Right cardiac atrium (tissue), 5 donors: ENCODE measurements at regions of chr11 and their contacts with region 1.

Region 1: DNA sequence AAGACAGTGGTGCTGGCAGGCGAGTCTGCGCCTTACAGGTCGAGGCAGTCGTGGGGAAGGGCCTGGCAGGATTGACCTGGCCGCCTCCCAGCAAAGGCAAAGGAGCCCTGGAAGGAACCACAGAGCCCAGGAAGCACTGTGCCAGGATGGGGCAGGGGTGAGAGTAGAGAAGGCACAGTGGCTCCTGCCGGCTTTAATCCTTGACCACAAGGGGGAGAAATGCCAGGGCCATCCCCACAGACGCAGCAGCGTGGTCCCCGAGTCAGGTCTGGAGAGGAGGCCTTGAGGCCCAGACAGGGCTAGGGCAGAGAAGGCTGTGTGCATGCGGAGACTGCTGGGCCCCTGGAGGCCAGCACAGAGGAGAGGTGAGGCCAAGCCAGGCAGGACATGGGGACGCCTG is 9.9 kb upstream of the NDUFS8 start:
- DNase-seq: no peak
- ATAC-seq: peak; percentile 14 to 17
- H3K4me3 ChIP-seq: no peak overlapping the region
- H3K27ac ChIP-seq: no peak overlapping the region
- H3K4me1 ChIP-seq: peaks cover 5% of the 10 kb centered on the region
- H3K27me3 ChIP-seq: no peaks in the 10 kb centered on the region

Region 2: GRCh38 chr11:68003846-68004550 is 16.6 kb before region 1 on chr11 and contains the start of gene UNC93B1:
- intact Hi-C with region 1: no loop called
- DNase-seq: peak; percentile 94 to 98 (median 98)
- ATAC-seq: peak; percentile 92
- H3K4me3 ChIP-seq: peak within 1 kb of the TSS; percentile 94
- H3K27ac ChIP-seq: no peak within 1 kb of the TSS
- H3K4me1 ChIP-seq: no peaks in the 10 kb centered on the region
- H3K27me3 ChIP-seq: no peaks in the 10 kb centered on the region
- total RNA-seq, gene UNC93B1: 9.0 to 13.2 (median 11.9) TPM

Region 3: GRCh38 chr11:68090706-68091105 is 70.1 kb after region 1 on chr11:
- intact Hi-C with region 1: no loop called
- DNase-seq: no peak
- ATAC-seq: peak in 1 of 2 donors; percentile 79
- H3K4me3 ChIP-seq: no peak overlapping the region
- H3K27ac ChIP-seq: no peak overlapping the region
- H3K4me1 ChIP-seq: no peaks in the 10 kb centered on the region
- H3K27me3 ChIP-seq: no peaks in the 10 kb centered on the region

Region 4: DNA sequence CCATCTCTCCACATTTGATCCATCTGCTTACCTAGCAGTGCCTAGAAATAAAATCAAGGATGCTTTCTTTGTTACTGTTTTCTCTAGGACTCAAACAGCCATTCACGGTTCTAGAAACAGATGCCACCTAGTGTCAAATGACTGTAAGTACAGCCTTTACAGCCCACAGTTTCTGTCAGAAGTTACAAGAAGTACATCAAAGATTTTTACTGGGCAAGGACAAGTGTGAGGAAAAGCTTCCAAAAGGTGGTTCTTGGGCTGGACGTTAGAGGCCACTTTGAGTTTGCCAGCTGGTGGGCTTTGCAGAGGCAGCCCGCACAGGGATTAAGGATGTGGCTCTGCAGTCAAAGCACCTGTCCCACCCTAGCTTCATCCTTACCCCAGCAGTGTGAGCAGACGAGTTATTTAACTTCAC is 185.6 kb after region 1 on chr11:
- intact Hi-C with region 1: loop called in 1 of 4 experiments (anchors 10 kb)
- DNase-seq: no peak
- ATAC-seq: peak; percentile 28 to 49
- H3K4me3 ChIP-seq: no peak overlapping the region
- H3K27ac ChIP-seq: no peak overlapping the region
- H3K4me1 ChIP-seq: peaks cover 9% of the 10 kb centered on the region
- H3K27me3 ChIP-seq: no peaks in the 10 kb centered on the region